AG04449 (cell line): ENCODE measurements at regions of chr16 and their contacts with region 1.

Region 1: DNA sequence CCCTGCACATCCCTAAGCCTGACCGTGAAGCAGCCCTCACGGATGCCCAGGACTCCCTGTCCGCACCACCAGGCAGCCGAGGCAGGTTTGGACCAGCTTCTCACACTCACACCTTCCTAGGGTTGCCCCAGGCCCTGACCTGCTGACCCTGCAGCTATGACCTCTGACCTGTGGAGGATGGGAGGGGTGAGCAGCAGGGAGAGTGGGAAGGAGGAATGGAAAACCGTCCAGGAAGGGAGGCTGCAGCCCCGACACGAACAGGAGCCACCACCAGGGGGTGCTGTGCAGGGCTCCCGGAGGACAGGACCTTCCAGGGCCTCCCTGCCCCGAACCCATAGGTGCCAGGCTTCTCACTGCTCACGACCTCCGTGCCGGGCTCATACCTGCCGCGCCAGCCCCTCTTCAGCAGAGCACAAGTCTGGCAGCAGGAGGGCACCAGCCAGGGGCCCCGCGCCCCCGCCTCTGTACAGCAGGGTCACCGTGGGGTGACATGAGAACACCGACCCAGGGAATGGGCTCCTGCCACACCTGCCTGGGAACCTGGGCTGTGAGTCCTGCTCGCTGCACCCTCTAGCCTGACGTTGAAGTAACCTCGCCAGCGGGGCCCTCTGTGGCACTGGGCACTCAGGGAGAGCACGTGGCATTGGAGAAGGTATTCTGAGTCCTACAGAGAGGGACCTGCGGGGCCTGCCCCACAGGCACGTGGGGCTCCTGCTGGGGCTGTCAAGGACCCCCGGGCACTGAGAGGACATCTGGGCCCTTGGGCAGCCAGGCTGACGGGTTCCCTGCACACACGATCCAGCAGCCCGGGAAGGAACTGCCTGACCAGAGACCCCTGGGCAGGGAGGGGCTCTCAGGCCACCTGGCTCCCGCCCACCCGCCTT is 37.6 kb downstream of the CTU2 start:
- DNase-seq: no peak
- H3K4me3 ChIP-seq: no peak overlapping the region
- CTCF ChIP-seq: peak; percentile 93

Region 2: GRCh38 chr16:88727871-88728270 is 16.1 kb before region 1 on chr16:
- CTCF ChIA-PET with region 1: no interaction called
- POLR2A ChIA-PET with region 1: no interaction called
- DNase-seq: no peak
- H3K4me3 ChIP-seq: no peak overlapping the region
- CTCF ChIP-seq: no peak

Region 3: GRCh38 chr16:88799569-88800276 is 55.8 kb after region 1 on chr16:
- CTCF ChIA-PET with region 1: interaction called, 17 read pairs
- POLR2A ChIA-PET with region 1: no interaction called
- DNase-seq: no peak
- H3K4me3 ChIP-seq: no peak overlapping the region
- CTCF ChIP-seq: no peak